ENCODE measurements at regions of chr21 and their contacts with region 1.

Region 1: GRCh38 chr21:15051644-15052458 is 12.9 kb downstream of the NRIP1 start:
- DNase-seq: no peak
- ATAC-seq: peak in 2 of 4 donors; percentile 51 to 57
- H3K4me3 ChIP-seq: peak overlapping the region; percentile 9
- H3K27ac ChIP-seq: no peak overlapping the region
- H3K4me1 ChIP-seq: peaks cover 80% of the 10 kb centered on the region
- H3K27me3 ChIP-seq: no peaks in the 10 kb centered on the region
- CTCF ChIP-seq: no peak

Region 2: DNA sequence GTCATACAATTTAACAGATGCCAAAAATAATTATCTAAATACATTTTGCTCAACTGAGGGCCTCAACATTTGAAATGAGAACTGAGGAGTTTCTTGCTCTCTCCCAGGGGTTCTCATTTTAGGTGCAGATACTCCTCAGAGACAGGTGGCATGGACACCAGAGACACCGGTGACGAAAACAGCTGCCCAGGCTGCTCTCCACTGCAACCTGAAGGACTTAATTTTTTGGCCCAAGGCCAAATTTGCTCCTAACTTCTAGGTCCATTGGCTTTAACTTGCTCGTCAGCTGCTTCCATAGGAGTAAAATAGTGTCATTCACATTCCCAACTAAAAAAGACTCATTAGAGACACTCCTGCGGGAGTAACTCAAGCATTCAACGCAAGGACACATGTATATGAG is 74.0 kb before region 1 on chr21:
- intact Hi-C with region 1: loop called in 1 of 2 experiments (anchors 10 kb)
- DNase-seq: no peak
- ATAC-seq: peak; percentile 56 to 71 (median 67)
- H3K4me3 ChIP-seq: no peak overlapping the region
- H3K27ac ChIP-seq: no peak overlapping the region
- H3K4me1 ChIP-seq: peaks cover 22% of the 10 kb centered on the region
- H3K27me3 ChIP-seq: no peaks in the 10 kb centered on the region
- CTCF ChIP-seq: no peak